ENCODE measurements at regions of chr3 and their contacts with region 1.

Region 1: DNA sequence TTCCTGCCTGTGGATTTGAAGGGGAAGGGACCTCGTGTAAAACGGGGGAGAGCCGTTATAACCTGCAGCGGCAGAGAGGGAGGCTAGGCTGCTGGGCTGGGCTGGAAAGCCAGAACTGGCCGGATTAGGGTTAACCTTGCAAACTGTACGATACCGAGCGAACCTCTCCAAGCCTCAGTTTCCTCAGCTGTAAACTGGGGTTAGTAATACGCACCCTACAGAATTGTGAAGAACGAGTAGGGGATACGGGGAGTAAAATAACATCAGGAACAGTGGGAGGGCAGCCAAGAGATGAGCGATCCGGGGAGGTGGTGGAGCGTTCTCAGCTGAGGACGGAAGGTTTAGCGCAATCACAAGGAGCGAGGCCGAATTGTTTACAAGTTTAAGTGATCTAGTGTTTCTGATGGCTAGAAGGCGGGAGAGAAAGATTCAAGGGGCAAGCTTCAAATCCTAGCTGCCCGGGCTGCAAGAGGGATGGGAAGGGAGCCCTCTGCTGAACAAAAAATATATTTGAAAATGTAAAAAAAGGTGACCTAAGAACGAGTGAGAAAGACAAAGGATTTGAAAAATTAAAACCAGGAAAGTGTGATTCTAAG is 768 bp upstream of the SEMA5B start:
- DNase-seq: peak; percentile 28
- H3K4me3 ChIP-seq: peak overlapping the region; percentile 45
- CTCF ChIP-seq: peak; percentile 31

Region 2: DNA sequence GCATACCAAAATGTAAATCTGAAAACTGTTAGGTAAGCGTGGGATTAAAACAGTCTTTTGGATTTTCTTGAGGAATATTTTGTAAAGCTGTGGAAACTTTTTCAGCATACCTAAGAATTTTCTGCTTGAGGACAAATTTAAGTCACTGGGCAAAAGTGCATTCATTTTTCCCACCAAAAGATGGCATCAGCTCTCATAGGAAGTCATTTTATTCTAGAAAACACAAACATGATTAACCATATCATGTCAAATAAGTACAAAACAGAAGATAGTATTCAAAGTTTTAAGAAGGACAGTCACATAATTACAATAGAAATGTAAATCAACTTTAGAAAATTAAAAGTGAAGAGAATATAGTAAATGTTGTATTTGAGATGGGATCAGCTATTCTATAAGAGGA is 170.0 kb before region 1 on chr3:
- CTCF ChIA-PET with region 1: interaction called, 10 read pairs
- POLR2A ChIA-PET with region 1: no interaction called
- DNase-seq: no peak
- H3K4me3 ChIP-seq: no peak overlapping the region
- CTCF ChIP-seq: no peak

Region 3: GRCh38 chr3:122975163-122975923 is 53.0 kb before region 1 on chr3:
- CTCF ChIA-PET with region 1: no interaction called
- POLR2A ChIA-PET with region 1: no interaction called
- DNase-seq: no peak
- H3K4me3 ChIP-seq: no peak overlapping the region
- CTCF ChIP-seq: no peak

Region 4: GRCh38 chr3:123042413-123042812 is 14.1 kb after region 1 on chr3:
- CTCF ChIA-PET with region 1: interaction called, 16 read pairs
- POLR2A ChIA-PET with region 1: no interaction called
- DNase-seq: no peak
- H3K4me3 ChIP-seq: no peak overlapping the region
- CTCF ChIP-seq: no peak